AG04450 (cell line): ENCODE measurements at regions of chr3 and their contacts with region 1.

Region 1: DNA sequence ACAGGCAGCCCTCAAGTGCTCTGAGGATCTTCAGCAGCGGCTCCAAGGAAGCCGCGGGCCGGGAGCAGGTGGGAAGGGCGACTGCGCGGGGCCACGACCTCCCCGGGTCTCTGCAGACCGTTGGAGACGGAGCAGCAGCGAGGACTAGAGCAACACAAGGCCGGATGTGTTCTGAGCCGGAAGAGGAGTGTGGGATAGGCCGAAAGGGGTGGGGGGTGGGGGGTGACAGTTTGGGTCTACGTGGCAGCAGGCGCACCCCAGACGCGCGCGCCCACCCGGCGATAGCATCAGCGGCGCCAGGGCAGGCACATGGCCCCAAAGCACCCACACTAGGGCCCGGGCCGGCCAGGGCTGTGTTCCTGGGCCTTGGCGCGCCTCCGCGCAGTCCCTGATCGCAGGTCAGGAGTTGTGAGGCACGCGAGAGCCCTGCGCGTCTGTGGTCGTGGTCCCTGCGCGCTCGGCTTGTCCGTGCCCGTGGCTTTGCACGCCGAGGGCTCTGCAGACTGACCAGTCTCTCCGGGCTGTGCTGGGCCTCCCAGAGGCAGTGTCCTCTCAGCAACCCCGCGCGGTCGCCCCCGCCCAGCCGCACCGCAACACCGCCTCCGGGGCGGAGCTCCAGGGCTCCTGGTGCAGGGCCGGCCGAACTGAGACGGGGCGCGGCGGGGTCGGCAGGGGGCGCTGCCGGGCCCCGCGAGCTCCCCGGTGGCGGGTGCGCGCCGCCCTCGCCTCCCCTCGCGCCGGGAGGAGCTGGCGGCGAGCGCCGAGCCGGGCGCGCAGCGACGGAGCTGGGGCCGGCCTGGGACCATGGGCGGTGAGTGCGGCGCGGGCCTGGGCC is at the start of gene PXYLP1:
- DNase-seq: peak; percentile 51
- H3K4me3 ChIP-seq: peak within 1 kb of the TSS; percentile 78
- H3K27ac ChIP-seq: peak within 1 kb of the TSS; percentile 77
- H3K27me3 ChIP-seq: no peaks in the 10 kb centered on the region
- CTCF ChIP-seq: peak; percentile 39; the same call in 1 of the 2 replicates
- polyA plus RNA-seq, gene PXYLP1: 20.0 and 21.7 TPM in 2 replicates

Region 2: GRCh38 chr3:141243271-141243707 is 12.0 kb after region 1 on chr3:
- CTCF ChIA-PET with region 1: interaction called, 56 read pairs
- POLR2A ChIA-PET with region 1: no interaction called
- DNase-seq: no peak
- H3K4me3 ChIP-seq: no peak overlapping the region
- H3K27ac ChIP-seq: no peak overlapping the region
- H3K27me3 ChIP-seq: no peaks in the 10 kb centered on the region
- CTCF ChIP-seq: no peak

Region 3: DNA sequence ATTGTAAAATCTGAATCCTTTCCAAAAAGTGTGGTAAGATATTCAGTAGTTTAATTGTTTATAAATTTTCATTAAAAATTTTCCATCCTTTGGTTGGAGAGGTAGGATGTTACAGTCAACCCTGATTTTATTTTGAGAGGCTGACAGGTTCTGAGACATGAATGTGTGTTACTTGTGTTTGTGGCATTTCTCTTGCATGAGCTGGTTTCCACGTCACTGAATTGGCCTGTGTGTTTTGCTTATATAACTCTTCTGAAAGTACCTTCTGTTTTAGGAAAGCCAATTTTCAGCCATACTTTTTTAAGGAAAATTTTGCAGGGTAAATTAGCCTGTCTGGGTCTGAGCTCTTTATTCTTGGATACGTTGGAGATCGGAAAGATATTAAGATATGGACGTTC is 31.0 kb after region 1 on chr3:
- CTCF ChIA-PET with region 1: interaction called, 14 read pairs
- POLR2A ChIA-PET with region 1: no interaction called
- DNase-seq: peak; percentile 67
- H3K4me3 ChIP-seq: no peak overlapping the region
- H3K27ac ChIP-seq: no peak overlapping the region
- H3K27me3 ChIP-seq: no peaks in the 10 kb centered on the region
- CTCF ChIP-seq: no peak

Region 4: DNA sequence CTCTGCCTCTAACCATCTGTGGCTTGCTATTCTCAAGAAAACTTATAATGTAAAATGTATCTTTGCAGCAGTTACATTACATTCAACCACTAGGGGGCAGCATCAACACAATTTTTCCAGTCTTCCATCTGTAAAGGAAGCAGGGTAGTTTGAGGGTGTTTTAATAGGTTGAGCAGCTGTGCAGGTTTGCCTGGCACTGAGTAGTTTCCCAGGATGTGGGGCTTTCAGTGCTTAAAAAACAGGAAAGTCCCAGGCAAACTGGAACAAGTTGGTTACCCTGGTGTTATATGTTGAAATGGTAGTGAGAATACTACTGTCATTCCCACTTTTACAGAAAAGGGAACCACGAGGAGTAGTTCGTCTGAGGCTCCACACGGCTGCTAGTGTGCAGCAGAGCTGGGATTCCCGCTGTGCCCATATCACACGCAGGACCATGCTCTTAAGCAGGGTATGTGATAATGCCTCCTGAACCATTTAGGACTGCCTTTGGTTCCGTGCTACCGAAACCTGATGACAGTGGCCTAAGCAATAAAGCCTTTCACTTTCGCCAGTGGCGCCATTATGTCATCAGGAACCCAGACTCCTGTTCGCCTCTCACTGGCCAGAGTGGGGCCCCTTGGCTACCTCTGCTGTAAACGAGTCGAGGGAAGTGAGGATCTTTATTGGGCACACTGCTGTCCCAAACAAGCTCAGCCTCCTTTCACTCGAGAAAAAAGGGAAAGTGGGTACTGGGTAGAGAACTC is 72.3 kb after region 1 on chr3:
- CTCF ChIA-PET with region 1: interaction called, 19 read pairs
- POLR2A ChIA-PET with region 1: interaction called, 7 read pairs
- DNase-seq: peak; percentile 73
- H3K4me3 ChIP-seq: no peak overlapping the region
- H3K27ac ChIP-seq: no peak overlapping the region
- H3K27me3 ChIP-seq: no peaks in the 10 kb centered on the region
- CTCF ChIP-seq: peak; percentile 72

Region 5: GRCh38 chr3:141460097-141460704 is 228.9 kb after region 1 on chr3:
- CTCF ChIA-PET with region 1: interaction called, 42 read pairs
- POLR2A ChIA-PET with region 1: no interaction called
- DNase-seq: peak; percentile 72
- H3K4me3 ChIP-seq: no peak overlapping the region
- H3K27ac ChIP-seq: no peak overlapping the region
- H3K27me3 ChIP-seq: no peaks in the 10 kb centered on the region
- CTCF ChIP-seq: peak; percentile 92